B cell (primary cell): ENCODE measurements at regions of chr1 and their contacts with region 1.

Region 1: GRCh38 chr1:107877092-107877491 is 87.9 kb downstream of the VAV3 start:
- DNase-seq: no peak
- ATAC-seq: peak; percentile 53
- H3K4me3 ChIP-seq: peak overlapping the region in 1 of 5 experiments; percentile 17
- H3K4me3 Mint-ChIP-seq: peak overlapping the region; percentile 56
- H3K27ac ChIP-seq: no peak overlapping the region
- H3K27ac Mint-ChIP-seq: no peak overlapping the region
- H3K4me1 ChIP-seq: peaks cover 47 to 61% of the 10 kb centered on the region in 2 donors
- H3K4me1 Mint-ChIP-seq: peaks cover 77% of the 10 kb centered on the region
- H3K27me3 ChIP-seq: no peaks in the 10 kb centered on the region
- H3K27me3 Mint-ChIP-seq: no peaks in the 10 kb centered on the region
- CTCF ChIP-seq: no peak

Region 2: GRCh38 chr1:107547363-107548155 is 329.5 kb before region 1 on chr1:
- CTCF ChIA-PET with region 1: no interaction called
- POLR2A ChIA-PET with region 1: no interaction called
- intact Hi-C with region 1: no loop called
- DNase-seq: no peak
- ATAC-seq: no peak
- H3K4me3 ChIP-seq: no peak overlapping the region
- H3K4me3 Mint-ChIP-seq: no peak overlapping the region
- H3K27ac ChIP-seq: no peak overlapping the region
- H3K27ac Mint-ChIP-seq: no peak overlapping the region
- H3K4me1 ChIP-seq: peaks cover 3 to 7% of the 10 kb centered on the region in 2 donors
- H3K4me1 Mint-ChIP-seq: no peaks in the 10 kb centered on the region
- H3K27me3 ChIP-seq: no peaks in the 10 kb centered on the region
- H3K27me3 Mint-ChIP-seq: no peaks in the 10 kb centered on the region
- CTCF ChIP-seq: no peak

Region 3: DNA sequence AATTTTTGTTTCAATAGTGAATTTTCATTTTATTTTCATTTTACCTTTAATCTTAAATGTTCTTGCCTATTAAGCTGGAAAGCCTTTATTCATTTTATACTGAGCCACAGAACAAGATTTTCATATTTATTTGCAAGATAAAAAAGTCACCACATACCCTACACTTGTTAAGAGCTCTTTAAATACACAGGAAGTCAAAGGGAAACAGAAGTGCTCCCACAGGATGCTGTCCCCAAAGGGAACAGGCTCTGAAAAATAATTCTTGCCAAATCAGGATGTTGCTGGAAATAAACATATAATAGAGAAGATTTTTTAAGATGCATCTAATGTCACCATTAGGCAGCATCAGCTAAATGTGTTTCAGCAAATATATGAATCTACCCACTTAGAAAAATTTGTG is 25.7 kb before region 1 on chr1:
- CTCF ChIA-PET with region 1: no interaction called
- POLR2A ChIA-PET with region 1: no interaction called
- intact Hi-C with region 1: no loop called
- DNase-seq: no peak
- ATAC-seq: no peak
- H3K4me3 ChIP-seq: no peak overlapping the region
- H3K4me3 Mint-ChIP-seq: no peak overlapping the region
- H3K27ac ChIP-seq: no peak overlapping the region
- H3K27ac Mint-ChIP-seq: no peak overlapping the region
- H3K4me1 ChIP-seq: peaks cover 15 to 23% of the 10 kb centered on the region in 2 donors
- H3K4me1 Mint-ChIP-seq: peaks cover 65% of the 10 kb centered on the region
- H3K27me3 ChIP-seq: no peaks in the 10 kb centered on the region
- H3K27me3 Mint-ChIP-seq: no peaks in the 10 kb centered on the region
- CTCF ChIP-seq: no peak

Region 4: DNA sequence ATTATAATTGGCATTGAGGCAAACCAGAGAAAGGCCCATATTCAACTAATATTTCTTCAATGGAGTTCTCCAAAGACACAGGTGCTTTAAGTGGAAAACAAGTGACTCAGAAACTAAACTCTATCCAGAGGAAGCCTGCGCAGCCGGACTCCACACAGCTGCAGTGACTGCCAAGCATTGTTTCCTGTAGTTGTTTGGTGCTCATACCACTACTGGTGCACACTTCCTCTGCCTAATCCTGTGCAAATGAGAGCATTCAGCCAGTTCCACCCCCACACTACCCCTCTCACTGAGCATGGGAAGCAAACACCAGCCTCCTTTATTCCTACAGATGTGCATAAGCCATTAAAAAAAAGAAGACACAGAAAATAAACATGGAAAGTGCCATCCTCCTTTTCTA is 15.0 kb before region 1 on chr1:
- CTCF ChIA-PET with region 1: interaction called, 3 read pairs
- POLR2A ChIA-PET with region 1: no interaction called
- intact Hi-C with region 1: loop called (anchors 2 kb)
- DNase-seq: peak; percentile 34
- ATAC-seq: peak; percentile 82
- H3K4me3 ChIP-seq: peak overlapping the region in 1 of 5 experiments; percentile 22
- H3K4me3 Mint-ChIP-seq: peak overlapping the region; percentile 68
- H3K27ac ChIP-seq: peak overlapping the region; percentile 19 to 42
- H3K27ac Mint-ChIP-seq: peak overlapping the region; percentile 90
- H3K4me1 ChIP-seq: peaks cover 54 to 56% of the 10 kb centered on the region in 2 donors
- H3K4me1 Mint-ChIP-seq: peaks cover 69% of the 10 kb centered on the region
- H3K27me3 ChIP-seq: no peaks in the 10 kb centered on the region
- H3K27me3 Mint-ChIP-seq: no peaks in the 10 kb centered on the region
- CTCF ChIP-seq: no peak